Left cardiac atrium (tissue), 4 donors: ENCODE measurements at regions of chr9 and their contacts with region 1.

Region 1: GRCh38 chr9:9054354-9054992 is 1254.9 kb upstream of the DMAC1 start:
- DNase-seq: no peak
- ATAC-seq: no peak

Region 2: GRCh38 chr9:9102295-9102694 is 47.8 kb after region 1 on chr9:
- intact Hi-C with region 1: no loop called
- DNase-seq: no peak
- ATAC-seq: no peak

Region 3: DNA sequence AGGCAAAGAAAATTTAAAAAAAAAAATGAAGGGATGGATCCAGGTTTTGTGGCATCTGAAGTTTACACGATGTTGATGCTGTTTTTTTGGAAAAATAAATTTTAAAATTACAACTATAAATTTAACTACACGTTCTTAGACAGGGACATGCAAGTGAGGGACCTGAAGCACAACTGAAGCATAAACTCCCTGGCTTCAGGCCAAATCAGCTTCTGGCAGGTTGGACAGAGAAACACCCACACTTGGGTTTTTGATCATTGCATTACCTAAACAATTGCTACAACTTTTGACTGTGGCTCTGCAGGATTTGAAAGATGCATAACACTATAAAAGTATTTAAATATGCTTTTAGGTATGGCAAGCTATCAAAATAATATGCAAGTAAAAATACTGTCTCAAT is 63.4 kb after region 1 on chr9:
- intact Hi-C with region 1: loop called in 1 of 2 experiments (anchors 10 kb)
- DNase-seq: no peak
- ATAC-seq: no peak